ENCODE measurements at regions of chr6 and their contacts with region 1.

Region 1: GRCh38 chr6:113018351-113019151 is 671.4 kb downstream of the RFPL4B start:
- DNase-seq: peak; percentile 74
- ATAC-seq: peak; percentile 33; the same call in 1 of the 2 replicates
- H3K4me3 ChIP-seq: no peak overlapping the region
- H3K27ac ChIP-seq: no peak overlapping the region
- H3K4me1 ChIP-seq: peaks cover 8% of the 10 kb centered on the region
- H3K27me3 ChIP-seq: no peaks in the 10 kb centered on the region
- CTCF ChIP-seq: no peak
- POLR2A ChIP-seq: no peak
- RAD21 ChIP-seq: no peak

Region 2: GRCh38 chr6:112956696-112957528 is 61.6 kb before region 1 on chr6:
- CTCF ChIA-PET with region 1: no interaction called
- POLR2A ChIA-PET with region 1: no interaction called
- dilution Hi-C with region 1: no loop called
- in situ Hi-C with region 1: no loop called
- intact Hi-C with region 1: no loop called
- DNase-seq: peak; percentile 95
- ATAC-seq: peak; percentile 90
- H3K4me3 ChIP-seq: no peak overlapping the region
- H3K27ac ChIP-seq: peak overlapping the region; percentile 81; the same call in 1 of the 2 replicates
- H3K4me1 ChIP-seq: peaks cover 2% of the 10 kb centered on the region
- H3K27me3 ChIP-seq: no peaks in the 10 kb centered on the region
- CTCF ChIP-seq: no peak
- POLR2A ChIP-seq: no peak
- RAD21 ChIP-seq: no peak

Region 3: DNA sequence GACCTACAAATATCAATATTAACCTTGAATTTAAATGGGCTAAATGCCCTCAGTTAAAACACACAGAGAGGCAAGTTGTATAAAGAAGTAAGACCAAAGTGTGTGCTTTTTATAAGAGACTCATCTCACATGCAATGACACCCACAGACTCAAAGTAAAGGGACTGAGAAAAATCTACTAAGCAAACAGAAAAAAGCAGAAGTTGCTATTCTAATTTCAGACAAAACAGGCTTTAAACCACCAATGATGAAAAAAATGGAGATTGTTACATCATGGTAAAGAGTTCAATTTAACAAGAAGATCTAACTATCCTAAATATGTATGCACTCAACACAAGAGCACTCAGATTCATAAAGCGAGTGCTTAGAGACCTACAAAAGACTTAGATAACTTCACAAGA is 96.6 kb after region 1 on chr6:
- CTCF ChIA-PET with region 1: no interaction called
- POLR2A ChIA-PET with region 1: no interaction called
- dilution Hi-C with region 1: no loop called
- in situ Hi-C with region 1: no loop called
- intact Hi-C with region 1: loop called (anchors 10 kb)
- DNase-seq: no peak
- ATAC-seq: no peak
- H3K4me3 ChIP-seq: no peak overlapping the region
- H3K27ac ChIP-seq: no peak overlapping the region
- H3K4me1 ChIP-seq: peaks cover 2% of the 10 kb centered on the region; the same call in 1 of the 2 replicates
- H3K27me3 ChIP-seq: no peaks in the 10 kb centered on the region
- CTCF ChIP-seq: no peak
- POLR2A ChIP-seq: no peak
- RAD21 ChIP-seq: no peak

Measured in IMR-90 (cell line).